GM12878 (cell line): ENCODE measurements at regions of chr17 and their contacts with region 1.

Region 1: GRCh38 chr17:77494664-77495435 is 354.1 kb downstream of the SEC14L1 start:
- DNase-seq: no peak
- ATAC-seq: peak; percentile 89
- H3K4me3 ChIP-seq: no peak overlapping the region
- H3K27ac ChIP-seq: no peak overlapping the region
- H3K4me1 ChIP-seq: peaks cover 16% of the 10 kb centered on the region
- H3K27me3 ChIP-seq: no peaks in the 10 kb centered on the region
- CTCF ChIP-seq: peak; percentile 87 to 93 (median 92)
- EP300 ChIP-seq: no peak
- POLR2A ChIP-seq: peak; percentile 51; the same call in 1 of the 2 replicates
- RAD21 ChIP-seq: peak; percentile 85

Region 2: DNA sequence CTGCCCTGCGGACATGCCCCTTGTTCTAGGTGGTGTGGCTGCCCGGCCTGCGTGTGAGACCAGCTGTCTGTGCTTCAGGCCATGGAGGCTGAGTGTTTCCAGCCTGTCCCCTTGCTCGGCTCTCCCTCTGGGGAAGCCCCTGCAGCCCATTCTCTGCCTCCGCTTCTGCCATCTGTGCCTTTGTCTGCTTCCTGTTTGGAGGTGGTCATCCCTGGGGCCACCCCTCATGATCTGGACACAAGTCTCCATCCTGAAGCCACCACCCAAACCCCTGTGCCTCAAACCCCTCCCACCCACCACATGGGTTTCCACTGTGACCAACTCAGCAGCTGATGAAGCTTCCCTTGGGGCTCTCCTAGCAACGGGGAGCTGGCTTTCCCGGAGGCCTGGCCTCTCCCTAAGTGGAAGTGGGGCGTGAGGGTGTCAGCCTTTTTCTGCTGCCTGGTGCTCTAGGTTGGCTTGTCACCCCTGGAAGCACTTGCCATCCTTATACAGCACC is 169.2 kb before region 1 on chr17:
- CTCF ChIA-PET with region 1: interaction called, 45 read pairs
- POLR2A ChIA-PET with region 1: no interaction called
- RAD21 ChIA-PET with region 1: interaction called, 32 read pairs
- SMC1A ChIA-PET with region 1: interaction called, 26 read pairs
- in situ Hi-C with region 1: loop called (anchors 5 kb)
- intact Hi-C with region 1: no loop called
- DNase-seq: no peak
- ATAC-seq: peak; percentile 11
- H3K4me3 ChIP-seq: peak overlapping the region; percentile 21; the same call in 1 of the 2 replicates
- H3K27ac ChIP-seq: peak overlapping the region; percentile 88
- H3K4me1 ChIP-seq: peaks cover 51% of the 10 kb centered on the region
- H3K27me3 ChIP-seq: no peaks in the 10 kb centered on the region
- CTCF ChIP-seq: no peak
- EP300 ChIP-seq: no peak
- POLR2A ChIP-seq: no peak
- RAD21 ChIP-seq: no peak

Region 3: DNA sequence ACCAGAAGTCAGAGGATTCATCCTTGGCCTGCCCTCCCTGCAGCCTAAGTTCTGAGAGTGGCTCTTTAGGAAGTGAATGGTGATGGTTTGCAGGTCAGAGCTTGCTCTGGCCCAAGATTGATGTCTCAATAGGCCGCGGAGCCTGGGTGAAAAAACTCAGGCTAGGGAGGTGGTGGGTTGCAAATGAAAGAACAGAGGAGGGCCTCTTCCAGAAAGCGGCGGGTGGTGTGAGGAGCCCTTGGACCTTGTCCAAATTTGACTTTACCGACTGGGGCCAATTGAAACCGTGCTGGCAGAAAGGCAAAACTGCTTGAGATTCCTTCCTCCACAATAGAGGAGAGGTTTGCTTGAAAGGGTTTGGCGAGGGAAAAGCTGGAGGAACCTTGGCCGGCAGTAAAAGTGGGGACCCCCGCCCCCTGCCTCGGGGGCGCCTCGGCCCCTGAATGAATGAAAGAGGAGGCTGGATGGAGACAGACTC is 22.8 kb before region 1 on chr17:
- CTCF ChIA-PET with region 1: interaction called, 13 read pairs
- POLR2A ChIA-PET with region 1: interaction called, 3 read pairs
- RAD21 ChIA-PET with region 1: interaction called, 13 read pairs
- SMC1A ChIA-PET with region 1: interaction called, 8 read pairs
- in situ Hi-C with region 1: no loop called
- intact Hi-C with region 1: no loop called
- DNase-seq: no peak
- ATAC-seq: peak; percentile 34
- H3K4me3 ChIP-seq: peak overlapping the region; percentile 48
- H3K27ac ChIP-seq: peak overlapping the region; percentile 90
- H3K4me1 ChIP-seq: peaks cover 63% of the 10 kb centered on the region
- H3K27me3 ChIP-seq: no peaks in the 10 kb centered on the region
- CTCF ChIP-seq: no peak
- EP300 ChIP-seq: no peak
- POLR2A ChIP-seq: no peak
- RAD21 ChIP-seq: no peak

Region 4: DNA sequence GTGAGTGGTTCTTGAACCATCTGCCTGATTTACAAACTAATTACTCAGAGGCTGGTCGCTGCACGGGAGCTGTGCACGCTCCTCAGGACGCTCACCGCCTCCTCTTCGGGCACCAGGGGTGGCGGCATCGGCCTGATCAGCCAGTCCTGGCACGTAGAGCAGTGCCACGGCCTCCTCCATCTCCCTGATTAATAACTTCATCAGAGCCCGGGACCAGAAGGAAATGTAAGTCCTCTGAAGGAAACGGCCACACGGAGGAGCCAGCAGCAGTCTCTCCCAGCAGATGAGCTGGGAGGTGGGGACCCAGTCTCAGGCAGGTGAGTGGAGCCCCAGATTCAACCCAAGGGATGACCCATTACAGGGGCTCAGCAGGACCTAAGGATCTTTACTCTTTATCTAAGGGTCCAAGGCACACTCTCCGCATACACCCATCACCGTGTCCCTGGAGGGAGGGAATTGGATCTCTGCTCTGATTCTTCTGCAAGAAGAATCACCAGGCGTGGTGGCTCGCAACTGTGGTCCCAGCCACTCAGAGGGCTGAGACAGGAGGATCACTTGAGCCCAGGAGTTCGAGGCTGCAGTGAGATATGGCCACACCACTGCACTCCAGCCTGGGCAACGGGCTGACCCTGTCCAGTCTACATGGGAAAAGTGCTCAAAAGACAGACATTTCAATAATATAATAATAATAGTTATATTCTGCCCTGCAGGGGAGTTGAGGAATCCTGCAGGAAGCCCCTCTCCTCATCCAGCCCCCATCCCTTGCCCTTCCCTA is 12.4 kb after region 1 on chr17:
- CTCF ChIA-PET with region 1: no interaction called
- POLR2A ChIA-PET with region 1: no interaction called
- RAD21 ChIA-PET with region 1: no interaction called
- SMC1A ChIA-PET with region 1: no interaction called
- in situ Hi-C with region 1: no loop called
- intact Hi-C with region 1: no loop called
- DNase-seq: no peak
- ATAC-seq: no peak
- H3K4me3 ChIP-seq: no peak overlapping the region
- H3K27ac ChIP-seq: no peak overlapping the region
- H3K4me1 ChIP-seq: no peaks in the 10 kb centered on the region
- H3K27me3 ChIP-seq: no peaks in the 10 kb centered on the region
- CTCF ChIP-seq: peak in 1 of 3 experiments; percentile 5; a peak in 1 of 6 replicates
- EP300 ChIP-seq: no peak
- POLR2A ChIP-seq: no peak
- RAD21 ChIP-seq: no peak

Region 5: GRCh38 chr17:77520936-77521475 is 26.2 kb after region 1 on chr17:
- CTCF ChIA-PET with region 1: no interaction called
- POLR2A ChIA-PET with region 1: no interaction called
- RAD21 ChIA-PET with region 1: no interaction called
- SMC1A ChIA-PET with region 1: no interaction called
- in situ Hi-C with region 1: no loop called
- intact Hi-C with region 1: no loop called
- DNase-seq: no peak
- ATAC-seq: no peak
- H3K4me3 ChIP-seq: no peak overlapping the region
- H3K27ac ChIP-seq: no peak overlapping the region
- H3K4me1 ChIP-seq: no peaks in the 10 kb centered on the region
- H3K27me3 ChIP-seq: no peaks in the 10 kb centered on the region; a peak in 1 of 4 replicates
- CTCF ChIP-seq: no peak
- EP300 ChIP-seq: no peak
- POLR2A ChIP-seq: no peak
- RAD21 ChIP-seq: no peak

Region 6: DNA sequence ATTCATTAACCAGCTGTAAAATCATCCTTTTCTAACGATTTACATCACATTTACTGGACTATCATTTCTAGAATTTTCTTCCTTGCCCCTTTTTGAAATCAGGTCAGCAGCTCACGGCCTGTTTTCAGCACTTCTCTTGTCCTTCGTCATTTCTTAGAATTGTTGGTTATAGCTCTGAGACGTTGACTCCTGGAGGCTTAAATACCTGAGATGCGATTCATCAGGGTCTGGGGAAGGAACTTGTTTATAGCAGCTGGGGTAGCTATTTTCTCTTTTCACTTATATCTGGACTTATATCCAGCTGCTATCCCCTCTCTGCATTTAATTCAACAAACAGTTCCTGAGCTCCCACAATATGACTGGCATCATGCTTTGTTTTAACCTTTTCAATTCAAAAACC is 125.0 kb after region 1 on chr17:
- CTCF ChIA-PET with region 1: no interaction called
- POLR2A ChIA-PET with region 1: no interaction called
- RAD21 ChIA-PET with region 1: no interaction called
- SMC1A ChIA-PET with region 1: no interaction called
- in situ Hi-C with region 1: no loop called
- intact Hi-C with region 1: no loop called
- DNase-seq: no peak
- ATAC-seq: no peak
- H3K4me3 ChIP-seq: no peak overlapping the region
- H3K27ac ChIP-seq: no peak overlapping the region
- H3K4me1 ChIP-seq: no peaks in the 10 kb centered on the region
- H3K27me3 ChIP-seq: no peaks in the 10 kb centered on the region; a peak in 1 of 4 replicates
- CTCF ChIP-seq: no peak
- EP300 ChIP-seq: no peak
- POLR2A ChIP-seq: no peak
- RAD21 ChIP-seq: no peak